T-cell (primary cell): ENCODE measurements at regions of chr12 and their contacts with region 1.

Region 1: DNA sequence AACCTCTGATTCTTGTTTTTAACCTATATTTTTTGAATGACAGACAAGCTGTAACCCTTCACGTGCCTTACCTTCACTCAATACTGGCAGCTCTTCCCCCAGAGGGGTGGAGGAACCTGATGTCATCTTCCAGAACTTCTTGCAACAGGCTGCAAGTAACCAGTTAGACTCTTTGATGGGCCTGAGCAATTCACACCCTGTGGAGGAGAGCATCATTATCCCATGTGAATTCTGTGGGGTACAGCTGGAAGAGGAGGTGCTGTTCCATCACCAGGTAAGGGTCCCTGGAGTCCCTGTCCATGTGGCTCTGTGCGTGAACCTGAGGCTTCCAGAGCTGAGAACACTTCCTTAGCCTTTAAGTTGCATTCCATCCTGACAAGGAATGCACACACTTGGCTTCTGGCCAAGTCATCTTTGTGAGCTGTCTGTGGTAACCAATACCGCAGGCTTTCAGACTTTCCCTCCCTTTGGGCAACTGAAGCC is 22.7 kb downstream of the TRAFD1 start:
- DNase-seq: peak in 1 of 35 experiments; percentile 3
- ATAC-seq: no peak
- H3K4me3 ChIP-seq: no peak overlapping the region
- H3K4me3 Mint-ChIP-seq: no peak overlapping the region
- H3K27ac ChIP-seq: no peak overlapping the region
- H3K27ac Mint-ChIP-seq: no peak overlapping the region
- H3K4me1 ChIP-seq: no peaks in the 10 kb centered on the region
- H3K4me1 Mint-ChIP-seq: peaks cover 0 to 7% (median 2%) of the 10 kb centered on the region in 3 donors
- H3K27me3 ChIP-seq: no peaks in the 10 kb centered on the region
- H3K27me3 Mint-ChIP-seq: no peaks in the 10 kb centered on the region

Region 2: GRCh38 chr12:112125250-112125999 is 22.6 kb before region 1 on chr12 and contains the start of gene TRAFD1:
- CTCF ChIA-PET with region 1: no interaction called
- POLR2A ChIA-PET with region 1: interaction called in 1 of 2 experiments, 11 read pairs
- DNase-seq: peak; percentile 91 to 99 (median 97)
- ATAC-seq: peak; percentile 99 to 100 (median 99)
- H3K4me3 ChIP-seq: peak within 1 kb of the TSS; percentile 87 to 95
- H3K4me3 Mint-ChIP-seq: peak within 1 kb of the TSS; percentile 81 to 85 (median 83)
- H3K27ac ChIP-seq: peak within 1 kb of the TSS; percentile 83
- H3K27ac Mint-ChIP-seq: peak within 1 kb of the TSS; percentile 83 to 87
- H3K4me1 ChIP-seq: peaks cover 23 to 44% of the 10 kb centered on the region in 2 experiments
- H3K4me1 Mint-ChIP-seq: peaks cover 36 to 48% (median 43%) of the 10 kb centered on the region in 3 donors
- H3K27me3 ChIP-seq: peaks cover 0 to 3% of the 10 kb centered on the region in 2 experiments
- H3K27me3 Mint-ChIP-seq: no peaks in the 10 kb centered on the region
- total RNA-seq, gene TRAFD1: 26.4 to 39.9 (median 36.9) TPM

Region 3: DNA sequence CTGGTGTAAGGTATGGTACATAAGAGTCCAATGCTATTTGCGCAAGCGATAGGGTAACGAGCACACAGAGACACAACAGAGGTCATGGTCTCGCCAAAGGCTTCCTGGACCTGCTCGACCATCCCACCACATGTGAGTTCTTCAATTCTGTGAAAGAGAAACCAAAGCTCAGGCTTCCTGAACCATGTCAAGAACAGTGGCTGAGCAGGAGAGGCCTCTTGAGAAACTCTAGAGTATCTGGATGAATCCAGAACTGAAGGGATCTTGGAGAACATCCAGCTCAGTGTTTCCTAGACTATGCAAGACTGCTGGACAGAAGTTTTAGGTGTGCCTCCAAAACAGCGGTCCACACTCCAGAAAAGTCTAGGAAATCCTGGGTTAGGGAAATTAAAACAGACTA is 91.8 kb after region 1 on chr12:
- CTCF ChIA-PET with region 1: no interaction called
- POLR2A ChIA-PET with region 1: no interaction called
- DNase-seq: no peak
- ATAC-seq: no peak
- H3K4me3 ChIP-seq: no peak overlapping the region
- H3K4me3 Mint-ChIP-seq: no peak overlapping the region
- H3K27ac ChIP-seq: no peak overlapping the region
- H3K27ac Mint-ChIP-seq: no peak overlapping the region
- H3K4me1 ChIP-seq: no peaks in the 10 kb centered on the region
- H3K4me1 Mint-ChIP-seq: no peaks in the 10 kb centered on the region
- H3K27me3 ChIP-seq: no peaks in the 10 kb centered on the region
- H3K27me3 Mint-ChIP-seq: no peaks in the 10 kb centered on the region